ENCODE measurements at regions of chr17 and their contacts with region 1.

Region 1: DNA sequence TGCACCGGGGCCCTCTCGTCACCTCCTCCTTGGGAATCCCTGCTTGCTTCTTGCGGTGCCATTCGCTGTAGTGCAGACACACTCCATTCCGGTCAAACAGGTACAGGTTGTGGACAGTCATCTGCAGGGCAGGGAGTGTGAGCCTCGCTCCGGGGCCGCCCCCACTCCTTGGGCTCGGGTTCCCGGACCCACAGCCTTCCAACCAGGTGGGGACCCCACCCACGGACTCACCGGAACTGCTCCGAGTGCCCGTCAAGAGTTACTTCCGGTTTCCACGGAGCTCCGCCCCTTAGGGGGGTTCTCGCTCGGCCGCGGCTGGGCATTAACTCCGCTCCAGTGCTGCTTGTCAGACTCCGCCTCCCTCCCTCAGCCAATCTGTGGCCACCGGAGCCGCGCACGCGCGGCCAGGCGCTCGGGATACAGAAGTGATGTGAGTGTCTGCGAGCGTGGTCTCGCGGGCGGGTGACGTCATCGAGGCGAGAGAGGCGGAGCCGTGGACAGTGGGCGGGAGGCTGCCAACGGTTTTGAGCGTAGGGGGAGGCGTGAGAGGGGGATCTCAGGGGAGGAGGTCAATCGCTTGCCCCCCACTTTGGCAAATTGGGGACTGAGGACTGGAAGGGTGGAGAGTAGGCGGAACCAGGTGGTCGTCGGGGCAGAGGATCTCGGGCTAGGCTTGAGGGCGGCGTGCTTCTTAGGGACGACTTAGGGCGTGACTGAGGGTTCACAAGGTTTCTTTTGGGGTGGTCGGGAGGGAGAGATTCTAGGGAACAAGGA is at the starts of genes CNTROB and TRAPPC1:
- DNase-seq: peak; percentile 99 to 100
- ATAC-seq: peak; percentile 86 to 94
- H3K4me3 ChIP-seq: peak within 1 kb of the TSS; percentile 69
- H3K27ac ChIP-seq: peak within 1 kb of the TSS; percentile 86 to 89
- H3K4me1 ChIP-seq: peaks cover 21% of the 10 kb centered on the region
- CTCF ChIP-seq: no peak
- EP300 ChIP-seq: no peak
- POLR2A ChIP-seq: peak; percentile 72
- RAD21 ChIP-seq: no peak
- polyA plus RNA-seq, gene CNTROB: 23.2 and 28.3 TPM in 2 replicates
- polyA plus RNA-seq, gene TRAPPC1: 200 and 204 TPM in 2 replicates

Region 2: DNA sequence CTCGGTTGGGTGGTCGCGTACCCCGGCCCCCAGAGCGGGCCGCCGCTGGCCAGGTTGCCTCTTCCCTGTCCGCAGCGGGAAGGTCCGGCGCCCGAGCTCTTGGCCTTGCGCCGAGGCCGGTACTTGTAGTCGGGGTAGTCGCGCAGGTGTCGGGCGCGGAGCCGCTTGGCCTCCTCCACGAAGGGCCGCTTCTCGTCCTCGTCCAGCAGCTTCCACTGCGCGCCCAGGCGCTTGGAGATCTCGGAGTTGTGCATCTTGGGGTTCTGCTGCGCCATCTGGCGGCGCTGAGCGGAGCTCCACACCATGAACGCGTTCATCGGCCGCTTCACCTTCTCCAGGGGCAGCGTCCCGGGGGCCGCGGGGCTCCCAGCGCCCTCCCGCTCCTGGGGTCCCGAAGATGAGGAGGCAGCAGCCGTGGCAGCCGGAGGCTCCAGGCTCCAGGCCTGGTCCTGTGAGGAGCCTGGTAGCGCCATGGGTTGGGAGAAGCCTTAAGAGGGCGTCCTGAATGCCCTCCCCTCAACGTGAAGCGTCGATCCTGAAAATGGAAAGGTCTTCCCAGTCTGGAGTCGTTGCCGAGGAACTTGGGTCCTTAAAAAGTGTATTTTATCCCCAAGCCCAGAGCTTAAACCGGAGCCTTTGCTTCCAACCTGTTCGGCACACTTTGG is 342.6 kb before region 1 on chr17:
- CTCF ChIA-PET with region 1: no interaction called
- POLR2A ChIA-PET with region 1: no interaction called
- DNase-seq: peak in 1 of 2 experiments; percentile 72
- ATAC-seq: peak; percentile 22 to 65; a peak in 3 of 6 replicates
- H3K4me3 ChIP-seq: no peak overlapping the region
- H3K27ac ChIP-seq: peak overlapping the region in 1 of 2 experiments; percentile 78; a peak in 2 of 6 replicates
- H3K4me1 ChIP-seq: peaks cover 36% of the 10 kb centered on the region
- CTCF ChIP-seq: peak; percentile 46
- EP300 ChIP-seq: no peak
- POLR2A ChIP-seq: no peak
- RAD21 ChIP-seq: peak; percentile 44 to 45; a peak in 3 of 5 replicates

Region 3: DNA sequence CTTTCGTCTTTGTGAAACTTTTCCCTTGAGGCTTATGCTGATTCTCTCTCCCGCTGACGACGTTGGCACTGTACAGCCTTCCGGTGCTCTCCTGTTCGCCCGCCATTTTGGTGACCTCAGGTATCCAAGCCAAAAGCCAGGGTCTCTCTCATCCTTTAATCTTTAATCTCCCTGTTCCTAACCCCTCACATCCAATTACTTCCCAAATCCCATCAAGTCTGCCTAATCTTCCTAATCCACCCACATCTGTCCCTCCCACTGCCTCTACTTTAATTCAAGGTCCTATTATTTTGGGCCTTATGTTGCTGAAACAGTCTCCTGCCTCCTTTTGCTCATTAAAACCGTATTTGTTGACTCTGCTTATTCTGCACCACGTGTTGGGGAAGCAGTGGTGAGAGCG is 236.3 kb before region 1 on chr17:
- CTCF ChIA-PET with region 1: no interaction called
- POLR2A ChIA-PET with region 1: no interaction called
- DNase-seq: no peak
- ATAC-seq: no peak
- H3K4me3 ChIP-seq: no peak overlapping the region
- H3K27ac ChIP-seq: no peak overlapping the region
- H3K4me1 ChIP-seq: no peaks in the 10 kb centered on the region
- CTCF ChIP-seq: no peak
- EP300 ChIP-seq: no peak
- POLR2A ChIP-seq: no peak
- RAD21 ChIP-seq: no peak

Region 4: GRCh38 chr17:7850701-7851437 is 81.0 kb before region 1 on chr17:
- CTCF ChIA-PET with region 1: no interaction called
- POLR2A ChIA-PET with region 1: no interaction called
- DNase-seq: no peak
- ATAC-seq: peak; percentile 1; a peak in 3 of 6 replicates
- H3K4me3 ChIP-seq: no peak overlapping the region
- H3K27ac ChIP-seq: no peak overlapping the region
- H3K4me1 ChIP-seq: peaks cover 17% of the 10 kb centered on the region; the same call in 2 of the 3 replicates
- CTCF ChIP-seq: no peak
- EP300 ChIP-seq: no peak
- POLR2A ChIP-seq: no peak
- RAD21 ChIP-seq: no peak

Region 5: GRCh38 chr17:7887482-7888183 is 44.3 kb before region 1 on chr17:
- CTCF ChIA-PET with region 1: no interaction called
- POLR2A ChIA-PET with region 1: no interaction called
- DNase-seq: peak; percentile 96 to 98
- ATAC-seq: peak; percentile 70 to 89
- H3K4me3 ChIP-seq: peak overlapping the region; percentile 70
- H3K27ac ChIP-seq: peak overlapping the region; percentile 98
- H3K4me1 ChIP-seq: peaks cover 35% of the 10 kb centered on the region
- CTCF ChIP-seq: no peak
- EP300 ChIP-seq: no peak
- POLR2A ChIP-seq: peak; percentile 75
- RAD21 ChIP-seq: 0 out of 5 replicates have a peak, but pooled peaks of 1 of the 2 experiments have one; percentile 0

Region 6: GRCh38 chr17:7944326-7944725 is 12.4 kb after region 1 on chr17:
- CTCF ChIA-PET with region 1: interaction called, 18 read pairs
- POLR2A ChIA-PET with region 1: interaction called, 4 read pairs
- DNase-seq: no peak
- ATAC-seq: no peak
- H3K4me3 ChIP-seq: no peak overlapping the region
- H3K27ac ChIP-seq: no peak overlapping the region
- H3K4me1 ChIP-seq: no peaks in the 10 kb centered on the region
- CTCF ChIP-seq: no peak
- EP300 ChIP-seq: no peak
- POLR2A ChIP-seq: no peak
- RAD21 ChIP-seq: no peak

Measured in A549 (cell line).